Naive thymus-derived CD4-positive, alpha-beta T cell (primary cell): ENCODE measurements at regions of chr3 and their contacts with region 1.

Region 1: DNA sequence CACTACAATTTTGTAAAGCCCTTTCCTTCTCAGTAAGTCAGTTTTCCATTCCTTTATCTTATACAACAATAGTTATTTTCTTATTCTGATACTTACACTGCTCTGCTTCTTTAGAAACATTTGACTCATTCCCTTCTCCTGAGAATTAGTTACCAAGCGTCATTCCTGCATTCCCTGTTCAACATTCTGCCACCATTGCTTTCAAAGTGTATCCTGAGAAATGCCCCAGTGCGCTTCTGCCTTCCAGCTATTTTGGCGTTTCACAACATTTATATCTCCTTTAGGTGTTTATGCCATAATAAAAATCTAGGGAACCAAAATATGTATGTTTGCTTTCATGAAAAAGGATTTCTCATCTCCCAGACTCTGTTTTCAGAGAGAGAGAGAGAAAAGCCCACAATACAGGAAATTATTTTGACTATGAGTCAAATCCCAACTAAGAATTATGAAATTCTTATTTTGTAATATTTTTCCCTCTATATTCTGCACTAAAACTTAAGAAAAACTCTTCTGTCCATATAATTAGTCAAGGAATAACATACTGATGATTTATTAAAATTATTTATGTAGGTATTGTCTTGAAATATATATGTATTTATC is 118.2 kb upstream of the RAP2B start:
- DNase-seq: no peak
- ATAC-seq: no peak
- H3K4me3 ChIP-seq: no peak overlapping the region
- H3K4me3 Mint-ChIP-seq: no peak overlapping the region
- H3K27ac ChIP-seq: no peak overlapping the region
- H3K27ac Mint-ChIP-seq: no peak overlapping the region
- H3K4me1 ChIP-seq: no peaks in the 10 kb centered on the region
- H3K4me1 Mint-ChIP-seq: peaks cover 0 to 10% (median 2%) of the 10 kb centered on the region in 7 donors
- H3K27me3 ChIP-seq: no peaks in the 10 kb centered on the region
- H3K27me3 Mint-ChIP-seq: peaks cover 0 to 8% (median 0%) of the 10 kb centered on the region in 5 donors

Region 2: DNA sequence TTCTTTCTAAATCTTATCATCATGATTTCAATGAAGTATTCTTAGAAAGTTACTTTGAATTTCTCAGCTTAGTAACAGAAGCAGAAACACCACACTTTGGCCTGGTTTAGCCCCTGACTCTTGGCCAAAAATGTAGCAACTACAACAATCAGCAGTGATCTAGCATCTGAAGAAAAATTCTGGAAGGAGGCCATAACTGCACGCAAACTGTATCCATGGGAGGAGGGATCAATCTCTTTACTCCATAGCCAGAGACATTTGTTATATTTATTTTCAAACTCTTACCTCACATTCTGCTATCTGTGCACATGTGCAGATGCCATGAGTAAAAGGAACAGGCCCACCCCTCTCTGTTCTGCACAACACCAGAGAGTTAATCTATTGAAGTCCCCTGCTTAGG is 459.9 kb before region 1 on chr3:
- CTCF ChIA-PET with region 1: no interaction called
- POLR2A ChIA-PET with region 1: no interaction called
- intact Hi-C with region 1: no loop called
- DNase-seq: no peak
- ATAC-seq: no peak
- H3K4me3 ChIP-seq: no peak overlapping the region
- H3K4me3 Mint-ChIP-seq: no peak overlapping the region
- H3K27ac ChIP-seq: no peak overlapping the region
- H3K27ac Mint-ChIP-seq: no peak overlapping the region
- H3K4me1 ChIP-seq: no peaks in the 10 kb centered on the region
- H3K4me1 Mint-ChIP-seq: no peaks in the 10 kb centered on the region
- H3K27me3 ChIP-seq: no peaks in the 10 kb centered on the region
- H3K27me3 Mint-ChIP-seq: peaks cover 9 to 39% (median 17%) of the 10 kb centered on the region in 5 donors

Region 3: DNA sequence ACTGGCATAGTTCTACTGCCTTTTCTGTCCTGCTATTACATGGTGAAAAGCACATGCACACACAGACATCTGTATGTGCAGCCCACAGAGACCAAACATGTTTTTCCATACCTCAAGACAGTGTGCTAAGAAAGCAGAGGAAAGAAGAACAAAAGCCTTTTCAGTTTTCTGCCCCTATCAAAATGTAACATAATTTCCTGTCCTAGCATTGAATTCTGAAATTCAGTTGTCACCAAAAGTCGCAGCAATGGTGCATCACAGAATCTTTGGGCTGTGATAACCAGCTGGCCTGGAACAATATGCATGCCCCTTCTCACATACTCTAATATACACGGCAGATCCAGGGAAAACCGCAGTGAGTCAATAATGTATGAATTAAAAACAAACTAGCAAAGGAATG is 35.6 kb before region 1 on chr3:
- CTCF ChIA-PET with region 1: no interaction called
- POLR2A ChIA-PET with region 1: no interaction called
- intact Hi-C with region 1: no loop called
- DNase-seq: no peak
- ATAC-seq: no peak
- H3K4me3 ChIP-seq: no peak overlapping the region
- H3K4me3 Mint-ChIP-seq: no peak overlapping the region
- H3K27ac ChIP-seq: no peak overlapping the region
- H3K27ac Mint-ChIP-seq: no peak overlapping the region
- H3K4me1 ChIP-seq: no peaks in the 10 kb centered on the region
- H3K4me1 Mint-ChIP-seq: no peaks in the 10 kb centered on the region
- H3K27me3 ChIP-seq: no peaks in the 10 kb centered on the region
- H3K27me3 Mint-ChIP-seq: peaks cover 2 to 14% (median 11%) of the 10 kb centered on the region in 5 donors

Region 4: DNA sequence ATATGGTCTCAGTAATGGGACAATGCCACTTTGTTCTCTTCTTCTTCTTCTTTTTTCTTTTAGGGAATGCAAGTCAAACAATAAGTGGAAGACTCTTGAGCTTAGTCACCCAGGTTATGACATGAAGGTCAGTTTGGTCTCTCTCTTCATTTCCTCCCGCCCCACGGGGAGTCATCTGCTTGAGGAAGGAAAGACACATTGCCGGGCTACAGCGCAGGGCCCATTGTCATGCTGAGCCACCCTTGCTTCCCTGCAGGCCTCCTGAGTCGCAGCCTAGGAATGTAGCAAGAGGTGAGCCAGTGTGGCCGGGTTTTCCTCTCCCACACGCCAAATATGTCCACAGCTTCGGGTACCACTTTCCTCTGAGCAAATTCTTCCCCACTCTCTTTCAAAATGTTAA is 165.8 kb after region 1 on chr3:
- CTCF ChIA-PET with region 1: interaction called, 4 read pairs
- POLR2A ChIA-PET with region 1: no interaction called
- intact Hi-C with region 1: loop called in 1 of 2 experiments (anchors 5 kb)
- DNase-seq: no peak
- ATAC-seq: peak; percentile 85
- H3K4me3 ChIP-seq: no peak overlapping the region
- H3K4me3 Mint-ChIP-seq: peak overlapping the region in 9 of 10 donors; percentile 20 to 80 (median 72)
- H3K27ac ChIP-seq: no peak overlapping the region
- H3K27ac Mint-ChIP-seq: peak overlapping the region in 7 of 9 donors; percentile 0 to 87 (median 71)
- H3K4me1 ChIP-seq: peaks cover 6 to 14% of the 10 kb centered on the region in 2 donors
- H3K4me1 Mint-ChIP-seq: peaks cover 15 to 60% (median 45%) of the 10 kb centered on the region in 7 donors
- H3K27me3 ChIP-seq: no peaks in the 10 kb centered on the region
- H3K27me3 Mint-ChIP-seq: peaks cover 0 to 1% (median 0%) of the 10 kb centered on the region in 5 donors

Region 5: GRCh38 chr3:153513236-153513635 is 469.4 kb after region 1 on chr3:
- CTCF ChIA-PET with region 1: no interaction called
- POLR2A ChIA-PET with region 1: no interaction called
- intact Hi-C with region 1: loop called in 1 of 2 experiments (anchors 5 kb)
- DNase-seq: peak in 5 of 9 donors; percentile 19 to 25 (median 21)
- ATAC-seq: peak; percentile 38
- H3K4me3 ChIP-seq: no peak overlapping the region
- H3K4me3 Mint-ChIP-seq: no peak overlapping the region
- H3K27ac ChIP-seq: no peak overlapping the region
- H3K27ac Mint-ChIP-seq: no peak overlapping the region
- H3K4me1 ChIP-seq: no peaks in the 10 kb centered on the region
- H3K4me1 Mint-ChIP-seq: no peaks in the 10 kb centered on the region
- H3K27me3 ChIP-seq: no peaks in the 10 kb centered on the region
- H3K27me3 Mint-ChIP-seq: no peaks in the 10 kb centered on the region

Region 6: DNA sequence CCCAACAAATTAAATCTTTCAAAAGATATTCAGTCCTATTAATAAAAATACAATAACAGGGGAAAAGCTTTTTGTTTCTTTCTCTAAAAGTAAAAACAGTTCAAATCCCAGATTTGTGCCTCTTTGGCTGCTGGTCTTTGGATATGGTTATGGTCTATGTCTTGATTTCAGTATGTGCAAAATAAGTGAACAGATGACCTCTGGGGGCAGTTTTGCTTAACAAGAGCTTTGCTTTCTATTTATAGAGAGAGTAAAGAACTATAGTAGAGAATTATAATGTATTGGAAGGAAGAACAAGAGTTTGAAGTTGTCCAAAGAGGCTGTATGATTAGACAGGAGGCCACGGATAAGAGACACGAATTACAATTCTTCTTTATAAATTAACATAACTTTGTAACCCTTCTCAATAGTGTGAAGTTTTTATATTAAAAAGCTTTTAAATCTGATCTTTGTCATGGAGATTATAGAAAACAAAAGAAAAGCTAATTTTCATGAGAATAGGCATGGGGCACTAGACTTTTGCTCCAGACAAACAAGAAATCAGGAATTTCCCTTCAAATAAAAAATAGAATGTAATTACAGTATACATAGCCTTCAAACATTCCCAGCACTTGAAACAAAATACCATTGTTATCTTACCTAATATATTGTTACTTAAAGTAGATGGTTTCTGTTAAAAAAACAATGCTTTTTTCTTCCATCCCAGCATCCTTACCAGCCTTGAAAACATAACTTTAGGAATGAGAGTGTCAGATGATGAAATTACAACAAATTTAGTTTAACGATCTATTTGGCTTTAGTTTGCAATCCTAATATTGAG is 644.7 kb after region 1 on chr3:
- CTCF ChIA-PET with region 1: no interaction called
- POLR2A ChIA-PET with region 1: no interaction called
- intact Hi-C with region 1: loop called in 1 of 2 experiments (anchors 5 kb)
- DNase-seq: no peak
- ATAC-seq: no peak
- H3K4me3 ChIP-seq: no peak overlapping the region
- H3K4me3 Mint-ChIP-seq: no peak overlapping the region
- H3K27ac ChIP-seq: no peak overlapping the region
- H3K27ac Mint-ChIP-seq: no peak overlapping the region
- H3K4me1 ChIP-seq: no peaks in the 10 kb centered on the region
- H3K4me1 Mint-ChIP-seq: peaks cover 0 to 6% (median 0%) of the 10 kb centered on the region in 7 donors
- H3K27me3 ChIP-seq: no peaks in the 10 kb centered on the region
- H3K27me3 Mint-ChIP-seq: no peaks in the 10 kb centered on the region

Region 7: DNA sequence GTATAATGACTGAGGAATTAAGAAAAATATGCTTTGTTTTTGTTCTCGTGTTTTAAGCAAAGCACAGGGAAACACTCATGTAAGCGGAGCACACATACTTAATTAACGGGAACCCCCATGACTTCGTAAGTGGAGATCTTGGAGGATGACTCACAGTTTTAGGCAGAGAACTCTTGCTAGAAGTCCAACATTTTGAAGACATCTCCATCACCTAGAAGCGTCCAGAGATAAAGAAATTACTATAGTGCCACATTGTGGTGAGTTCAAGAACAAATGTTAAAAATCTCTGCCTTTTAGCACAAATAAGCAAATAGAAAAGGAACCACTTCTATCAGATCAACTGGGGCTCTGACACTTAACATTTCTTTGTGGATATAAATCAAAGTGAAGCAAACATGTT is 883.3 kb after region 1 on chr3:
- CTCF ChIA-PET with region 1: no interaction called
- POLR2A ChIA-PET with region 1: no interaction called
- intact Hi-C with region 1: loop called in 1 of 2 experiments (anchors 1 kb)
- DNase-seq: no peak
- ATAC-seq: no peak
- H3K4me3 ChIP-seq: no peak overlapping the region
- H3K4me3 Mint-ChIP-seq: no peak overlapping the region
- H3K27ac ChIP-seq: no peak overlapping the region
- H3K27ac Mint-ChIP-seq: no peak overlapping the region
- H3K4me1 ChIP-seq: no peaks in the 10 kb centered on the region
- H3K4me1 Mint-ChIP-seq: no peaks in the 10 kb centered on the region
- H3K27me3 ChIP-seq: no peaks in the 10 kb centered on the region
- H3K27me3 Mint-ChIP-seq: peaks cover 0 to 21% (median 10%) of the 10 kb centered on the region in 5 donors

Region 8: DNA sequence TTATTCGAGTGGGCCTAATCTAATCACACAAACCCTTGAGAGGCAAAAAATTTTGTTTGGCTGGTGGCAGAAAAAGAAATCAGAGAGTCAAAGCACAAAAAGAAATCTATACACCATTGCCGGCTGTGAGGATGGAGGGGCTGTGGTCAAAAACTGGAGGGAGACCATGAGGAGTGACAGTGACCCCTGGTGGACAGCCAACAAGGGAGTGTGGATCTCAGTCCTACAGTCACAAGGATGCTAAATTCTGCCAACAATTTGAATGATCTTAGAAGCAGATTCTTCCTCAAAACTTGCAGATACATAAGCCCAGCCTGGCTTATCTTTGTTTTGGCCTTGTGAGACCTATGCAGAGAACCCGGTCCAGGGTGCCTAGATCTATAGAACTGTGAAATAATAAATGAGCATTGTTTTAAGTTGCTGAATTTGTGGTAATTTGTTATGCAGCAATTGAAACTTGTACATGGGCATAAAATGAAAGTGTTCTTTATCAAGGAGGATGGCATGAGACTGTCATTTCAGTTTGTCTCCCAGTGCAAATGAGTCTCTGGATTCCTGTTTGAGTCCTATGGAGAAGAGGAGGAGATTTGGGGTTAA is 974.4 kb after region 1 on chr3:
- CTCF ChIA-PET with region 1: no interaction called
- POLR2A ChIA-PET with region 1: no interaction called
- intact Hi-C with region 1: loop called (anchors 1 kb)
- DNase-seq: peak in 6 of 9 donors; percentile 4 to 21 (median 14)
- ATAC-seq: no peak
- H3K4me3 ChIP-seq: no peak overlapping the region
- H3K4me3 Mint-ChIP-seq: no peak overlapping the region
- H3K27ac ChIP-seq: no peak overlapping the region
- H3K27ac Mint-ChIP-seq: no peak overlapping the region
- H3K4me1 ChIP-seq: no peaks in the 10 kb centered on the region
- H3K4me1 Mint-ChIP-seq: no peaks in the 10 kb centered on the region
- H3K27me3 ChIP-seq: no peaks in the 10 kb centered on the region
- H3K27me3 Mint-ChIP-seq: peaks cover 0 to 13% (median 4%) of the 10 kb centered on the region in 5 donors